ENCODE measurements at regions of chr5 and their contacts with region 1.

Region 1: GRCh38 chr5:127290019-127290945 is at the start of gene MEGF10:
- DNase-seq: peak; percentile 44 to 64 (median 60)
- ATAC-seq: peak; percentile 74
- H3K4me3 ChIP-seq: no peak within 1 kb of the TSS
- H3K4me1 ChIP-seq: peaks cover 9% of the 10 kb centered on the region
- CTCF ChIP-seq: peak; percentile 41
- total RNA-seq, gene MEGF10: 0.70 to 4.9 (median 0.81) TPM

Region 2: GRCh38 chr5:127235136-127235535 is 55.1 kb before region 1 on chr5:
- intact Hi-C with region 1: no loop called
- DNase-seq: no peak
- ATAC-seq: no peak
- H3K4me3 ChIP-seq: no peak overlapping the region
- H3K4me1 ChIP-seq: no peaks in the 10 kb centered on the region
- CTCF ChIP-seq: no peak

Region 3: DNA sequence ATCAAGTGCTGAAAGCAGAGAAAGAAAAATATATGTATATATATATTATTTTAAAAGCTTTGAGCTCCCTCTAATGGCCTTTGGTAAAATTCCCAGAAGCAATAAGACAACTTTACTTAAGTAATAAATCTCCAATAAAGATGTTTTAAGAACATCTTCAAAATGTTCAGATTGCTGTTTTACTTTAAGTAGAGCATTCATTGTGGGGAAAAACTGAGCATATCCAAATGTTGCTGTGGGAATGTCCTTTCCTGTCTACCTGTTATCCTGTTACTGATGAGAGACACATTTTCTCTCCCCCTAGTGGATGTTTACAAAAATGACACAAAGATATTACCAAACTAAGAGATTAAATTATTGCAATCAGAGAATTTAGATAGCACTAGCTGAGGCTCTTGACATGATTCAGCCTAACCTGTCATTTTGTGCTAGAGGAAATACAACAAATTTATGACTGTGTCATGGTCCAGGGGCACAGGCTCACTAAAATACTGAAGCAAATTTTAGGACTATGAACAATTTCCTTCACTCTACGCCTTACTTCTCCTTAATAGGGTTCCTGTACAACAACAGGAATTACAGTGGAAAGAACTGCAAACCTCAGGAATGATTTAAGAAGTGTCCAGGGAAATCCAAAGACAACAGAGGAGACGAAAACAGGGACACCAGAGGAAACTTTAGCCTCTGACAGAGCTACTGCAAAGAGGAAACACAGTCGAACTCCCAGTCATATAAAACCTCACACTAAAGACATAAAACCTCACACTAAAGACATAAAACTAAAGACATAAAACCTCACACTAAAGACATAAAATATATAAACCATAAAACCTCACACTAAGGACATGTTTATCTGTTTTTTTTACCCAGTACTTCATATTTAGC is 202.8 kb after region 1 on chr5:
- intact Hi-C with region 1: loop called in 1 of 2 experiments (anchors 2 kb)
- DNase-seq: peak in 1 of 3 donors; percentile 12
- ATAC-seq: peak; percentile 96
- H3K4me3 ChIP-seq: no peak overlapping the region
- H3K4me1 ChIP-seq: peaks cover 4% of the 10 kb centered on the region
- CTCF ChIP-seq: peak; percentile 13

Measured in mucosa of descending colon (tissue), 3 donors.